Heart left ventricle (tissue), 16 donors: ENCODE measurements at regions of chr6 and their contacts with region 1.

Region 1: DNA sequence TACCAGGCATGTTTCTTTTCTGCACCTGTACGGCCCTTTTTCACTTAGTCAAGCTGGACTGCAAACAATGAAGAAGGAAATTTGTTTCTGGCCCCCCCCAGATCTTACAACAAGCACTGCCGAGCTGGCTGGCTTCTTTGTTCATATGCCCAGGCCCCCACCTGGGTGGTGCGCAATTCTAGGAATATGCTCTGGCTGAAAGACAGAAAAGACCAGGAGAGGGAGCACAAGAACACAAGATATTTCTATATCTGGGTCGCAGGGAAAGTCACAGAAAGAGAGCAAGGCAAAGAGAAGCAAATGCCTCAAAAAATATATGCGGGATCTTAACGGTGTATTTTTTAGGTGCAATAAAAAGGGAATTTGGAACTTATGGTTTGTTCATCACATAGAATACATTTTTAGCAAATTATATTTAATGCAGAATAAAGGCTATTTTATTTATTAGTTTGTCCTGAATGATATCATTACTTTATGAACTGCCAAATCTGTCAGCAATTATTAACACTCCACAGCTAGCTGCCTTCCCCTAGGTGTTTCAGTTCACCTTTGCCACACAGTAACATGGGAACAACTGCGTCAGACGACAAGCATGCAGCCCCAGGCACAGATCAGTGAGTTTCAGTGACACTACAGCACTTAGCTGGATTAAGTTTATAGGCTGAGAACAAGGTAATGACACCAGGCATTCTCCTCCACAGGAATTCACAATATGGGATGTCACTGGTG is 76.5 kb downstream of the GJA10 start:
- DNase-seq: peak in 3 of 5 donors; percentile 30 to 40 (median 39)
- ATAC-seq: peak; percentile 62 to 84 (median 78)
- H3K4me3 ChIP-seq: no peak overlapping the region
- H3K27ac ChIP-seq: no peak overlapping the region
- H3K4me1 ChIP-seq: peaks cover 0 to 28% (median 3%) of the 10 kb centered on the region in 12 donors
- H3K27me3 ChIP-seq: no peaks in the 10 kb centered on the region
- CTCF ChIP-seq: peak; percentile 43 to 73 (median 63)
- POLR2A ChIP-seq: no peak

Region 2: GRCh38 chr6:90080876-90081481 is 110.2 kb after region 1 on chr6:
- intact Hi-C with region 1: loop called in 1 of 10 experiments (anchors 10 kb)
- DNase-seq: no peak
- ATAC-seq: no peak
- H3K4me3 ChIP-seq: peak overlapping the region in 1 of 12 donors; percentile 30
- H3K27ac ChIP-seq: no peak overlapping the region
- H3K4me1 ChIP-seq: peaks cover 0 to 8% (median 0%) of the 10 kb centered on the region in 12 donors
- H3K27me3 ChIP-seq: no peaks in the 10 kb centered on the region
- CTCF ChIP-seq: no peak
- POLR2A ChIP-seq: no peak

Region 3: GRCh38 chr6:90179190-90180169 is 208.7 kb after region 1 on chr6:
- intact Hi-C with region 1: loop called in 3 of 10 experiments (anchors 5 to 10 kb)
- DNase-seq: no peak
- ATAC-seq: no peak
- H3K4me3 ChIP-seq: no peak overlapping the region
- H3K27ac ChIP-seq: no peak overlapping the region
- H3K4me1 ChIP-seq: peaks cover 4 to 47% (median 35%) of the 10 kb centered on the region in 12 donors
- H3K27me3 ChIP-seq: no peaks in the 10 kb centered on the region
- CTCF ChIP-seq: peak in 10 of 12 donors; percentile 11 to 52 (median 36)
- POLR2A ChIP-seq: no peak

Region 4: GRCh38 chr6:90386399-90387382 is 415.9 kb after region 1 on chr6:
- intact Hi-C with region 1: loop called in 4 of 10 experiments (anchors 5 kb)
- DNase-seq: peak in 1 of 5 donors; percentile 18
- ATAC-seq: peak in 3 of 4 donors; percentile 75 to 78 (median 76)
- H3K4me3 ChIP-seq: no peak overlapping the region
- H3K27ac ChIP-seq: no peak overlapping the region
- H3K4me1 ChIP-seq: peaks cover 0 to 3% (median 0%) of the 10 kb centered on the region in 12 donors
- H3K27me3 ChIP-seq: no peaks in the 10 kb centered on the region
- CTCF ChIP-seq: no peak
- POLR2A ChIP-seq: no peak

Region 5: GRCh38 chr6:90478789-90479602 is 508.2 kb after region 1 on chr6:
- intact Hi-C with region 1: loop called in 9 of 10 experiments (anchors 1 to 10 kb)
- DNase-seq: peak; percentile 83 to 93 (median 85)
- ATAC-seq: peak; percentile 97 to 100 (median 99)
- H3K4me3 ChIP-seq: no peak overlapping the region
- H3K27ac ChIP-seq: no peak overlapping the region
- H3K4me1 ChIP-seq: peaks cover 0 to 10% (median 2%) of the 10 kb centered on the region in 12 donors
- H3K27me3 ChIP-seq: no peaks in the 10 kb centered on the region
- CTCF ChIP-seq: peak; percentile 86 to 97 (median 92)
- POLR2A ChIP-seq: no peak